ENCODE measurements at regions of chr5 and their contacts with region 1.

Region 1: GRCh38 chr5:74562122-74562521 is 78.4 kb downstream of the ENC1 start:
- DNase-seq: no peak
- H3K4me3 ChIP-seq: no peak overlapping the region
- H3K27ac ChIP-seq: no peak overlapping the region
- H3K4me1 ChIP-seq: peaks cover 0 to 2% (median 0%) of the 10 kb centered on the region in 4 donors
- H3K27me3 ChIP-seq: no peaks in the 10 kb centered on the region
- CTCF ChIP-seq: no peak
- EP300 ChIP-seq: no peak
- POLR2A ChIP-seq: no peak

Region 2: GRCh38 chr5:74517700-74518099 is 44.4 kb before region 1 on chr5:
- in situ Hi-C with region 1: no loop called
- intact Hi-C with region 1: loop called (anchors 1 kb)
- DNase-seq: no peak
- H3K4me3 ChIP-seq: no peak overlapping the region
- H3K27ac ChIP-seq: no peak overlapping the region
- H3K4me1 ChIP-seq: no peaks in the 10 kb centered on the region
- H3K27me3 ChIP-seq: no peaks in the 10 kb centered on the region
- CTCF ChIP-seq: no peak
- EP300 ChIP-seq: no peak
- POLR2A ChIP-seq: no peak

Measured in transverse colon (tissue), 4 donors.